PC-3 (cell line): ENCODE measurements at regions of chr1 and their contacts with region 1.

Region 1: DNA sequence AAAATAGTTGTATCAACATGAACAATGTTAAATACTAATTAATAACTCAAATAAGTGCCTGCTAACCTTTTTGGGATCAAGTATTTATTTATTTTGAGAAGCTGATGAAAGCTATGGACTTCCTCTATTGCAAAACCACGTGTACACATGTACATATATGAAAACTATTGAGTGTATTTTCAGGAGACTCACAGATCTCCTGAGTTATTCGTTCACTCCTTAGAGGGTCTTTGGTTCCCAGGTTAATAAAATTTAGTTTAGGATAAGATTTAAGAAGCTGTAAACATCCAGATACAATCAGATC is 130.5 kb downstream of the DISC1 start:
- DNase-seq: no peak
- ATAC-seq: peak; percentile 52
- H3K4me3 ChIP-seq: no peak overlapping the region
- H3K27ac ChIP-seq: no peak overlapping the region
- H3K4me1 ChIP-seq: 0 out of 2 replicates have a peak, but pooled peaks cover 5% of the 10 kb centered on the region
- H3K27me3 ChIP-seq: no peaks in the 10 kb centered on the region
- CTCF ChIP-seq: no peak

Region 2: DNA sequence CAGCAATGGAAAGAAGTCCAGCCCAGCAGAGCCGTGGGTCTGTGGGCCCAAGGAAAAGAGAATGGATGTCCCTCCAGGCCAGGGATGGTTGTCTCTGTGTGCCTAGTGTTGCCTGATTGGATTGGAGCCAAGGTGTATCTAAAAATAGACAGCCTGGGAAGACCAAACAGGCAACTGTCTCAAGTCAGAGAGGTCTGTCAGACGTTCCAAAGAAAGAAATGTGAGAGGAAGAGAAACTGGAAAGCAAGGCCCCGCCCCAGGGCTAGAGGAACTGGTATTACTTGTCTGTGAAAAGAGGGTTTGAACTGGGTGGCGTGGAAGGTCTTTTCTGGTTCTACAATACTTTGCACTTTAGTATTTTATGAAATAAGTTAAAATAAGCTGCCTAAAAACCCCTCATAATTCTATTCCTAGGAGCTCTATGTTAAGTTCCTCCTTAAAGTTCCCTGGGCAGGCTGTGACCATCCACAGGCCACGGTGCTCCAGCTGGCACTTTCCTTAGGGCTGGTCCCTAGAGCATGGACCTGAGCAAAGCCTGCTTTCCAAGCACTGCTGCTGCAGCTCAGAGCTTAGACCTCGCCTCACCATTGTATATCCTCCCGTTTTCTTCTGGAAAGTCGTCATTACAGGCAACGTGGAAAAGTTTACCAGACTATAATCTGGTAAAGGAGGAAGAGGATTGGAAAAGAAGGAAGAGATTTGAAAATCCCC is 21.1 kb after region 1 on chr1:
- CTCF ChIA-PET with region 1: interaction called, 11 read pairs
- POLR2A ChIA-PET with region 1: no interaction called
- intact Hi-C with region 1: no loop called
- DNase-seq: peak; percentile 89
- ATAC-seq: peak; percentile 58
- H3K4me3 ChIP-seq: no peak overlapping the region
- H3K27ac ChIP-seq: peak overlapping the region; percentile 70
- H3K4me1 ChIP-seq: peaks cover 25% of the 10 kb centered on the region
- H3K27me3 ChIP-seq: no peaks in the 10 kb centered on the region
- CTCF ChIP-seq: no peak

Region 3: DNA sequence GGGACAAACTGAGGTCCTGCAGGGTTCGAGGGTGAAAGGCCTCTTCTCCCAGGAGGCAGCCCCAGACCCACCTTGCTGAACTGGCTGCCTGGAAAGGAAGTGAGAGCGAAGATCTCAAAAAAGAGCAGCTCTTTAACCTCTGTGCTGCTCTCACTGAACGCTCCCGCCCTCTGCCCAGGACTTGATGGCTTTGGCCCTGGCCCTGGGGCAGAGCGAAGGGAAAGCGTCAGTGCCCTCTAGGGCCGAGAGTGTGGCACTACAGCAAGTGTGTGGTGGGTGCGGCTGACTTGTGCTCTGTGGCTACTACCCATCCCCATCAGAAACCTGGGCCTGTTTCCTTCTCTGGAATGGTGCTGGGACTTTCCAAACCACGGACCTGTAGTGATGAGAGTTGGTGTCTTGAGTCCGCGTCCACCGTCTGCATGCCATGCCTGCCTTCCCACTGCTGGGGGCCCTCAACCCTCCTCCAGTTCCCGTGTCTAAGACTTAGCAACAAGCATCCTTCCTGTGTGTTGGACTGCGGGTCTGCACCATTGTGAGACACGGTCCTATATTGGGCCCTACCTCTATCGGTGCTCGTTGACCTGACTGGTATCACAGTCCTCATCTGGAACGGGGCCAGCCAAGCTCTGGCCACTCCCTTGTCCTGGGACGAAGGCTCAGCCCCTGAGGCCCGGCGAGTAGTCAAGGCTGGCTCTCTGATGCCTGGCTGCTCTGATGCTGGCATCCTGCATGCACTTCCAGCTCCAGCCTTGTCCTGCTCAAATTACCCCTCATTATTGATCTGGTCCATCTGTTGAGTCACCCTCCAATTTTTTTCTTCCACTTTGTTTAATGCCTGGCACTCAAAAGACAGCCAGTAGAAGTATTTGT is 49.8 kb after region 1 on chr1:
- CTCF ChIA-PET with region 1: interaction called, 3 read pairs
- POLR2A ChIA-PET with region 1: no interaction called
- intact Hi-C with region 1: loop called (anchors 2 kb)
- DNase-seq: peak; percentile 78
- ATAC-seq: peak; percentile 53
- H3K4me3 ChIP-seq: no peak overlapping the region
- H3K27ac ChIP-seq: no peak overlapping the region
- H3K4me1 ChIP-seq: peaks cover 19% of the 10 kb centered on the region
- H3K27me3 ChIP-seq: no peaks in the 10 kb centered on the region
- CTCF ChIP-seq: peak; percentile 79

Region 4: GRCh38 chr1:231818337-231818736 is 61.3 kb after region 1 on chr1:
- CTCF ChIA-PET with region 1: no interaction called
- POLR2A ChIA-PET with region 1: no interaction called
- intact Hi-C with region 1: no loop called
- DNase-seq: no peak
- ATAC-seq: no peak
- H3K4me3 ChIP-seq: no peak overlapping the region
- H3K27ac ChIP-seq: no peak overlapping the region
- H3K4me1 ChIP-seq: peaks cover 6% of the 10 kb centered on the region; the same call in 1 of the 2 replicates
- H3K27me3 ChIP-seq: no peaks in the 10 kb centered on the region
- CTCF ChIP-seq: no peak

Region 5: DNA sequence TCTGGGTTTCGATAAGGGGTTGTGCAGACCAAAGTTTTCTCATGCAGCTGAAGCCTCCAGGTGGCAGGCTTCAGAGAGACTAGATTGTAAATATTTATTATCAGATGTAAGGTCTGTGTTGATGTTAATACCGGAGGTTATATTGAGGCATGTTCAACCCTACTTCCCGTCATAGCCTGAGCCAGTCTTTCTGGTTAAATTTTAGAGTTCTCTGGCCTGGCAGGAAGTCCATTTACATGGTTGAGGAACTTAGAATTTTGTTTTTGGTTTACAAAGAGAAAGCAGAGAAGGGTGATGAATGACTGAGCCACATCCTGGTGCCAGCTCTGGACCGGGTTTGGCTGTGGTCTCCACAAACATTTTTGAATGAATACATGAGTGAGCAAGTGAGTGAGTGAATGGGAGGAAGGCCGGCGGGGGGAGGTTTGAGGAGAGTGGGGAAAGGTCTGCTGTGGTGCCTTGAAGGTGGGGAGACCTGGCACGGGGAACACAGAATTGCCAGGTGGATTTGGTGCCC is 88.0 kb after region 1 on chr1:
- CTCF ChIA-PET with region 1: no interaction called
- POLR2A ChIA-PET with region 1: no interaction called
- intact Hi-C with region 1: loop called (anchors 5 kb)
- DNase-seq: peak; percentile 80
- ATAC-seq: peak; percentile 74
- H3K4me3 ChIP-seq: peak overlapping the region; percentile 8; the same call in 1 of the 2 replicates
- H3K27ac ChIP-seq: peak overlapping the region; percentile 54
- H3K4me1 ChIP-seq: peaks cover 20% of the 10 kb centered on the region
- H3K27me3 ChIP-seq: no peaks in the 10 kb centered on the region
- CTCF ChIP-seq: peak; percentile 53

Region 6: GRCh38 chr1:231866392-231867331 is 109.6 kb after region 1 on chr1:
- CTCF ChIA-PET with region 1: interaction called, 7 read pairs
- POLR2A ChIA-PET with region 1: no interaction called
- intact Hi-C with region 1: loop called (anchors 2 kb)
- DNase-seq: peak; percentile 79
- ATAC-seq: peak; percentile 67
- H3K4me3 ChIP-seq: no peak overlapping the region
- H3K27ac ChIP-seq: no peak overlapping the region
- H3K4me1 ChIP-seq: peaks cover 5% of the 10 kb centered on the region; the same call in 1 of the 2 replicates
- H3K27me3 ChIP-seq: no peaks in the 10 kb centered on the region
- CTCF ChIP-seq: peak; percentile 99

Region 7: DNA sequence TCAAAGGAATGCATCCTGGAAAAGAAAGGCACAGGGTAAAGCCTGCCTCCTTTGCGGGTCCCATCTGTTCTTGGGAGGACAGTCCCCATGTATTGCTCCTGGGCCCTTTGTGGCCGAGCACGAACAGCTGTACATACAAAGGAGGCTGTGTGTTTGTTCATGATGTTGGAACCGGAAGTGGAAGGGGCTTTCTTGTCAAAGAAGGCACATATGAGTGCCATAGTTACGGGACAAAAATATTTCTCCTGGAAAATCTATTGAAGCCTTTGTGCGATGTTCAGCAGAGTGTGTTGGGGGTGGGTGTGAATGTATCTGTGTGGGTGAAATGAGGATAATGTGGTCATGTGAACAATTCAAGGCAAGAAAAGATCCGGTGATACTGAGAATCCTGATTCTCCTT is 167.1 kb after region 1 on chr1:
- CTCF ChIA-PET with region 1: interaction called, 11 read pairs
- POLR2A ChIA-PET with region 1: no interaction called
- intact Hi-C with region 1: no loop called
- DNase-seq: no peak
- ATAC-seq: no peak
- H3K4me3 ChIP-seq: no peak overlapping the region
- H3K27ac ChIP-seq: no peak overlapping the region
- H3K4me1 ChIP-seq: no peaks in the 10 kb centered on the region
- H3K27me3 ChIP-seq: no peaks in the 10 kb centered on the region
- CTCF ChIP-seq: no peak

Region 8: GRCh38 chr1:232005300-232005699 is 248.2 kb after region 1 on chr1:
- CTCF ChIA-PET with region 1: no interaction called
- POLR2A ChIA-PET with region 1: no interaction called
- intact Hi-C with region 1: no loop called
- DNase-seq: no peak
- ATAC-seq: no peak
- H3K4me3 ChIP-seq: no peak overlapping the region
- H3K27ac ChIP-seq: no peak overlapping the region
- H3K4me1 ChIP-seq: no peaks in the 10 kb centered on the region
- H3K27me3 ChIP-seq: no peaks in the 10 kb centered on the region
- CTCF ChIP-seq: no peak